PC-9 (cell line): ENCODE measurements at regions of chr2 and their contacts with region 1.

Region 1: GRCh38 chr2:38146275-38146906 is 70.4 kb upstream of the CYP1B1 start:
- DNase-seq: peak; percentile 71 to 91
- H3K4me3 ChIP-seq: peak overlapping the region; percentile 43; the same call in 1 of the 2 replicates
- H3K27ac ChIP-seq: peak overlapping the region; percentile 96
- H3K4me1 ChIP-seq: peaks cover 59% of the 10 kb centered on the region
- H3K27me3 ChIP-seq: no peaks in the 10 kb centered on the region
- CTCF ChIP-seq: no peak

Region 2: GRCh38 chr2:37156857-37157714 is 989.3 kb before region 1 on chr2 and contains the start of gene EIF2AK2:
- CTCF ChIA-PET with region 1: no interaction called
- POLR2A ChIA-PET with region 1: interaction called, 16 read pairs
- intact Hi-C with region 1: no loop called
- DNase-seq: peak; percentile 77 to 85
- H3K4me3 ChIP-seq: peak within 1 kb of the TSS; percentile 95
- H3K27ac ChIP-seq: peak within 1 kb of the TSS; percentile 74
- H3K4me1 ChIP-seq: peaks cover 21% of the 10 kb centered on the region
- H3K27me3 ChIP-seq: no peaks in the 10 kb centered on the region
- CTCF ChIP-seq: no peak
- total RNA-seq, gene EIF2AK2: 39.8 and 61.2 TPM in 2 replicates

Region 3: DNA sequence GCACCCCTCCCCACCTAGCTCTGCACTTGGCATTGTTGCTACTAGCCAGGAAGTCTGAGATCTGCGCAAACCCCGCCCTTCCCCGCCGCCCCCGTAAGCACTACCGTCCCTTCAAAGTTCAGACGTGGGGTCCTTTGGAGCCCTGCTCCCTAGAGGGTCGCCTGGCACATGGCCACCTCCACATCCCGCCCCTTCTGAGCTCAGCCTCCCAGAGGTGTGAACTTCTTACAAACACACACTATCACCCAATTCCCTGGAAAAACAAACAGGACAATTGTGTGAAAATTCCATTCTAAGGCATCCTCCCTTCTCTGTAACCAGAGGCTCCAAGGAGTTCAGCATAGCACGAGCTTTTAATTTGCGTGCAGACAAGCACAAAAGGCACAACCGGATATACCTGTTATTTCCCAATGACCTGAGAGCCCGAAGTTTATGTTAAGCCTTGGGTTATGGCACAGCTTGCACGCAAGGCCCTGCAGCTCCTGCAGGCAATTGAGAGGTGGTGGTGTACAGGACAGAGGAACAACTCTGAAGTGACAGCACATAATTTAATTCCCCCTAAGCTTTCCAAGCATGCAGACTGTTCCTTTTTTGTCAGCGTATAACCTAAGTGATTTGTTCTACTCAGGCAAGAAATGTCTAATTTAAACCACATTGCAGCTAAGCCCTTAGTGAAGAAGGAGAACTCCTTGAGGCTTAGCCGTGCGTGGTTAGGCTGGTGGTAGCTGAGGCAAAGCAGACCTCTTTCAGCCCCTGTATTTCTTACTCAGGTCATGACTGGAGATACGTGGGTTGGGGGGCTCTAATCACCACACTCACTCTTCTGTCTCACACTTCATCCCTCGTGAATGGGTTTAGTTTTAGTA is 50.2 kb before region 1 on chr2:
- CTCF ChIA-PET with region 1: no interaction called
- POLR2A ChIA-PET with region 1: interaction called, 4 read pairs
- intact Hi-C with region 1: loop called (anchors 1 kb)
- DNase-seq: peak; percentile 77 to 100
- H3K4me3 ChIP-seq: peak overlapping the region; percentile 24; the same call in 1 of the 2 replicates
- H3K27ac ChIP-seq: peak overlapping the region; percentile 97
- H3K4me1 ChIP-seq: peaks cover 88% of the 10 kb centered on the region
- H3K27me3 ChIP-seq: no peaks in the 10 kb centered on the region
- CTCF ChIP-seq: no peak; the same call in 1 of the 2 replicates

Region 4: DNA sequence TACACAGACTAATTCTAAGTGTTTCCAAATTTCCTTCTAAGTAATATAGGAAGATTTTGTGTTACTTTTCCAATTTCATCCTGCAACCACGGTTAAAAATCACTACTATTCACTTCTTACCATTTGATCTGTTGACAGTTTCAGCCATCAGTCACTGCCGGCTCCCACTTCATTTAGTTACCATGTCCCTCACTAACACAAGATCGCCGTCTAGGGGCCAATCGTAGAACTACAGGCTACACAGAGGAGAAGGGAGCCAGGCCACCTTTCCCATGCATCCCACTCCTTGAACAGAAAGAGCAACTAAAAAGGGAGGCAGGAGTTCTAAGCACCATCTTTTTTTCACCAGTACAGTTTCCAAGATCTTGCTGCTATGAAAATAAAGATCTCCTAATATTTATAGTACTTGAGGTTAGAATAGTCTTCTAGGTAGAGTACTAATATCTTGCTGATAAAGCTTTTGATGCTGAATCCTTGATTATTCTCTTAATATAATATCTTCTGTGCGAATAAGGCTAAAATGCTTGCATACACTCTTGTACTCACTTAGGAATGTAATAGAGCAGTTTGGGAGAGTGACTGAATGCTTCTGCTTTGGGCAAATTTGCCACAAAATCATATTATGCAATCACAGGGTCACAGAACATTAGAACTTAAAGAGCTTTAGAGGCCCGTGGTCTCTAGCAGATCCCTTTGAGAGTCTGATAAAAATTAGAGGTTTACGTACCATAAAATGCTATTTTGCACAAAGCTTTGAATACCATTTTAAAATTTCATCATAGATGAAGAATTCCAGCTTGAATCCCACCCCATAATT is 31.0 kb before region 1 on chr2:
- CTCF ChIA-PET with region 1: interaction called, 5 read pairs
- POLR2A ChIA-PET with region 1: no interaction called
- intact Hi-C with region 1: loop called (anchors 1 kb)
- DNase-seq: peak; percentile 69 to 86
- H3K4me3 ChIP-seq: no peak overlapping the region
- H3K27ac ChIP-seq: peak overlapping the region; percentile 42
- H3K4me1 ChIP-seq: peaks cover 44% of the 10 kb centered on the region
- H3K27me3 ChIP-seq: no peaks in the 10 kb centered on the region
- CTCF ChIP-seq: peak; percentile 100

Region 5: GRCh38 chr2:38131676-38132075 is 14.7 kb before region 1 on chr2:
- CTCF ChIA-PET with region 1: no interaction called
- POLR2A ChIA-PET with region 1: no interaction called
- intact Hi-C with region 1: no loop called
- DNase-seq: no peak
- H3K4me3 ChIP-seq: no peak overlapping the region
- H3K27ac ChIP-seq: no peak overlapping the region
- H3K4me1 ChIP-seq: no peaks in the 10 kb centered on the region
- H3K27me3 ChIP-seq: no peaks in the 10 kb centered on the region
- CTCF ChIP-seq: no peak

Region 6: GRCh38 chr2:38164881-38165280 is 18.5 kb after region 1 on chr2:
- CTCF ChIA-PET with region 1: no interaction called
- POLR2A ChIA-PET with region 1: no interaction called
- intact Hi-C with region 1: no loop called
- DNase-seq: no peak
- H3K4me3 ChIP-seq: no peak overlapping the region
- H3K27ac ChIP-seq: no peak overlapping the region
- H3K4me1 ChIP-seq: peaks cover 19% of the 10 kb centered on the region
- H3K27me3 ChIP-seq: no peaks in the 10 kb centered on the region
- CTCF ChIP-seq: no peak

Region 7: GRCh38 chr2:38178547-38179419 is 32.4 kb after region 1 on chr2:
- CTCF ChIA-PET with region 1: interaction called, 4 read pairs
- POLR2A ChIA-PET with region 1: interaction called, 6 read pairs
- intact Hi-C with region 1: loop called (anchors 1 kb)
- DNase-seq: peak; percentile 48 to 73
- H3K4me3 ChIP-seq: no peak overlapping the region
- H3K27ac ChIP-seq: peak overlapping the region; percentile 25
- H3K4me1 ChIP-seq: peaks cover 41% of the 10 kb centered on the region
- H3K27me3 ChIP-seq: no peaks in the 10 kb centered on the region
- CTCF ChIP-seq: no peak

Region 8: GRCh38 chr2:38239461-38239860 is 93.1 kb after region 1 on chr2:
- CTCF ChIA-PET with region 1: no interaction called
- POLR2A ChIA-PET with region 1: no interaction called
- intact Hi-C with region 1: loop called (anchors 1 kb)
- DNase-seq: peak in 1 of 2 experiments; percentile 75
- H3K4me3 ChIP-seq: no peak overlapping the region
- H3K27ac ChIP-seq: no peak overlapping the region
- H3K4me1 ChIP-seq: peaks cover 5% of the 10 kb centered on the region
- H3K27me3 ChIP-seq: no peaks in the 10 kb centered on the region
- CTCF ChIP-seq: no peak